ENCODE measurements at regions of chr15 and their contacts with region 1.

Region 1: GRCh38 chr15:49675041-49675440 is 54.2 kb downstream of the DTWD1 start:
- DNase-seq: no peak
- ATAC-seq: no peak
- H3K4me3 Mint-ChIP-seq: no peak overlapping the region
- H3K27ac Mint-ChIP-seq: no peak overlapping the region
- H3K4me1 Mint-ChIP-seq: no peaks in the 10 kb centered on the region
- H3K27me3 Mint-ChIP-seq: peaks cover 7% of the 10 kb centered on the region

Region 2: GRCh38 chr15:49731187-49732099 is 56.4 kb after region 1 on chr15:
- CTCF ChIA-PET with region 1: no interaction called
- POLR2A ChIA-PET with region 1: no interaction called
- intact Hi-C with region 1: loop called in 1 of 2 experiments (anchors 10 kb)
- DNase-seq: no peak
- ATAC-seq: no peak
- H3K4me3 Mint-ChIP-seq: no peak overlapping the region
- H3K27ac Mint-ChIP-seq: no peak overlapping the region
- H3K4me1 Mint-ChIP-seq: no peaks in the 10 kb centered on the region
- H3K27me3 Mint-ChIP-seq: no peaks in the 10 kb centered on the region

Region 3: DNA sequence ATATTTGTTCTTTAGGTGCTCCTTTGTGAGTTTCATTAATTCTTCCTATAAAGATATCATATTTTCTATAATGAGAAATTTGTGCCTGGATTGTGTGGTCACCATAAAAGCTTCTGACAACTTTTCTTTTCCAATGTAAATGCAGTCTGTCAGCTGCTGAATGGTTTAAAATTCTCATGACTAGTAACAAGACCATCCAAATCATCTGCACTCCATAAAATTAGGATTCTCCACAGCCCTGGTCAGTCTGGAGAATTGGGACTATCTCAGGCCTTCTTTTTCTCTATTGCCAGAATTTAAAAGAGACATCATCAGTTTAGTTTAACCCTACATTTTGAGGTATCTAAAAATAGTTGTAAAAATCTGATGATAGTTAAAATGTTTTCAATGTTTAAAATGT is 126.8 kb after region 1 on chr15:
- CTCF ChIA-PET with region 1: no interaction called
- POLR2A ChIA-PET with region 1: no interaction called
- intact Hi-C with region 1: no loop called
- DNase-seq: no peak
- ATAC-seq: no peak
- H3K4me3 Mint-ChIP-seq: no peak overlapping the region
- H3K27ac Mint-ChIP-seq: no peak overlapping the region
- H3K4me1 Mint-ChIP-seq: no peaks in the 10 kb centered on the region
- H3K27me3 Mint-ChIP-seq: no peaks in the 10 kb centered on the region